ENCODE measurements at regions of chr1 and their contacts with region 1.

Region 1: DNA sequence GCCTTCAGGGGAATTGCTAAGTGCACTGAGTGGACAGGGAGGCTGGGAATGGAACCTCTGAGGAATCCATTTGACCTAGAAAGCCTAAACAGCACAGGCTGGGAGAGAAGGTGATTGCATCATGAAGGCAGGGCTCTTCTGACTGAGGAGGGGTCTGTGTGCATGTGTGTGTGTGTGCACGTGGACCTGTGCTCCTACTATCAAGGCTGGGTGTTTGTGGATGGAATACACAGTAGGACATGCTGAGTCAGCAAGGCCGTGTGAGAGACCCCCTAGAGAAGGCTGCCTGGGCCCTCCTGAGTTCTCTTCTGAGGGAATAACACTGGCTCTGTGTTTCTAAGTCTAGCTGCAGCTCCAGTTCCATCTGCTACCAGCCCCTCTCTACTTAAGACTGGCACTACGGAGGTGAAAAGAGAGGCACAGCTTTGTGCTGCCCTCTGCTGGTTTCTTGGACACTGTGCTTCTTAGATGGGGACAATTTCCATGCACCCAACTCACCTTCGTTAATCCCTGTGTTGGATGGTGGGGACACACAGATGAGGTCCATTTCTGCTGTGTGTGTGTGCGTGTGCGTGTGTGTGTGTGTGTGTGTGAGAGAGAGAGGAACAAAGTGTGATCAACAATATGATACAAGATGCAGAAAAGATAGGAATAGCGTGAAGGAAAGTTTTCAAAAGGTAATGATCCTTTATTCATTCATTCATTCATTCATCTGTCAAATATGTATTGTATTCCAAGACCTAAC is 6.2 kb upstream of the EFCAB14 start:
- DNase-seq: no peak
- H3K4me3 ChIP-seq: no peak overlapping the region
- H3K27ac ChIP-seq: no peak overlapping the region
- H3K4me1 ChIP-seq: no peaks in the 10 kb centered on the region
- H3K27me3 ChIP-seq: no peaks in the 10 kb centered on the region
- CTCF ChIP-seq: peak; percentile 56 to 86 (median 69)
- POLR2A ChIP-seq: no peak

Region 2: DNA sequence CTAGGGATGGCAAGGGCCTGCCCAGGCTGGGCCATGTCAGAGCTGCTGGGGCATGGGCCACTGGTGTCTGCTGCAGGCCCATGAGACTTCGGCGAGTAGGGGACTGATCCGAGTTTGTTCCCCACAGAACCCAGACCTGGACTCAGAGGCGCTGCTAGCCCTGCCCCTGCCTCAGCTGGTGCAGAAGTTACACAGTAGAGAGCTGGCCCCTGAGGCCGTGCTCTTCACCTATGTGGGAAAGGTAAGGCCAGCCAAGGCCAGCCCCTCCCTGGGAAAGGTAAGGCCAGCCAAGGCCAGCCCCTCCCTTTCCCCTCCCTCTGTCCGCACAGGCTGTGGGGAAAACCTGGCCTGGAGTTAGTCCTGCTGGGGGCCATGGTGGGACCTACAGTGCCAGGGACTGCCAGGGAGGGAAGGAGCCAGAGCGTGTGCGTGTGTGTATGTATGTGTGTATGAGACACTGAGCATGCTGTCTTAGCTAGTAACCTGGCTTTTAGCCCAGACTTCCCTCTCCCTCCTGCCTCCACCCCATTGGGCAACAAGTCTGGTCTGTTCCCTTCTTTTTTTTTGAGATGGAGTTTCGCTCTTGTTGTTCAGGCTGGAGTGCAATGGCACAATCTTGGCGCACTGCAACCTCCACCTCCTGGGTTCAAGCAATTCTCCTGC is 323.1 kb before region 1 on chr1:
- intact Hi-C with region 1: loop called (anchors 10 kb)
- DNase-seq: no peak
- H3K4me3 ChIP-seq: no peak overlapping the region
- H3K27ac ChIP-seq: peak overlapping the region; percentile 20
- H3K4me1 ChIP-seq: peaks cover 26% of the 10 kb centered on the region
- H3K27me3 ChIP-seq: no peaks in the 10 kb centered on the region
- CTCF ChIP-seq: no peak
- POLR2A ChIP-seq: no peak

Region 3: DNA sequence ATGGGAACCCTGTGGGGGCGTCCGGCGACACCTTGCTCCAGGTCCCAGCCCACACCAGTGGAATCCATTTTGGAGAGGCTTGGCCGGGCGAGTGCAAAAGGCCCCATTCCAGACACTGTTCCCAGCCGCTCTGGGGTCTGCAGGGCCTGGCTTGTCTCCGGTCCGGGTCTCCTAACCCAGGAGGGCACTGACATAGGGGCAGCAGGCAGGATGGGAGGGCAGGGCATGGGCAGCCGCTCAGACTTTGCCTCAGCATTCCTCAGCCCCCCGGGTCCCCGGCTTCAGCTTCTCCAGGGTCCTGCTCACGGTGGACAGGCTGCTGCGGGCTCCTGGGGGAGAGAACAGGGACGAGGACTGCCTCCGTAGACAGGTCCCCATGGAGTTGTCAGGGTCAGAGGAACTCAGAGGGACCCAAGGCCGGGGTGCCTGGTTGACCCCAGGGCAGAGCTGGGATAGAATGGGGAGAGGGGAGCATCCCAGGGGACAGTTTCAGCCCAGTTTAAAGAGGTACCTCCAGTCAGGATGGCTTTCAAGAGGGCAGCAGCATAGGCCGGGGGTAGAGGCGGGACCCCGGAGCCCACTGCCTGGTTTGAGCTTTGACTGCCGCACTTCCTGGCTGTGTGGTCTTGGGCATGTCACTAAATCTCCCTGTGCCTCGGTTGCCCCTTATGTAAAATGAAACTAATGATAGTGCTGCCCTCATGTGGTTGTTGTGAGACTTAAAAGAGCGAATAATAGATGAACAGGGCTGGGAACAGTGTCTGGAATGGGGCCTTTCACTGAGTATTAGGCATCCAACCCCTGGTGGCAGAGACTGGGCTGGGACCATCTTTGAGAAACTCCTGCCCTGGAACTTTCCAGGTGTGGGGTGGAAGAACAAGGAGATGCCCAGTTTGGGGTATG is 177.4 kb before region 1 on chr1:
- intact Hi-C with region 1: loop called (anchors 10 kb)
- DNase-seq: no peak
- H3K4me3 ChIP-seq: no peak overlapping the region
- H3K27ac ChIP-seq: no peak overlapping the region
- H3K4me1 ChIP-seq: peaks cover 9% of the 10 kb centered on the region
- H3K27me3 ChIP-seq: peaks cover 8% of the 10 kb centered on the region
- CTCF ChIP-seq: peak in 1 of 3 experiments; percentile 38
- POLR2A ChIP-seq: no peak

Region 4: GRCh38 chr1:46616277-46617107 is 108.7 kb before region 1 on chr1 and contains the start of gene MOB3C:
- intact Hi-C with region 1: loop called (anchors 10 kb)
- DNase-seq: peak in 1 of 2 donors; percentile 95
- H3K4me3 ChIP-seq: peak within 1 kb of the TSS; percentile 77 to 79
- H3K27ac ChIP-seq: peak within 1 kb of the TSS; percentile 92
- H3K4me1 ChIP-seq: peaks cover 61% of the 10 kb centered on the region
- H3K27me3 ChIP-seq: no peaks in the 10 kb centered on the region
- CTCF ChIP-seq: no peak
- POLR2A ChIP-seq: peak in 1 of 2 donors; percentile 65
- total RNA-seq, gene MOB3C: 33.9 TPM

Region 5: DNA sequence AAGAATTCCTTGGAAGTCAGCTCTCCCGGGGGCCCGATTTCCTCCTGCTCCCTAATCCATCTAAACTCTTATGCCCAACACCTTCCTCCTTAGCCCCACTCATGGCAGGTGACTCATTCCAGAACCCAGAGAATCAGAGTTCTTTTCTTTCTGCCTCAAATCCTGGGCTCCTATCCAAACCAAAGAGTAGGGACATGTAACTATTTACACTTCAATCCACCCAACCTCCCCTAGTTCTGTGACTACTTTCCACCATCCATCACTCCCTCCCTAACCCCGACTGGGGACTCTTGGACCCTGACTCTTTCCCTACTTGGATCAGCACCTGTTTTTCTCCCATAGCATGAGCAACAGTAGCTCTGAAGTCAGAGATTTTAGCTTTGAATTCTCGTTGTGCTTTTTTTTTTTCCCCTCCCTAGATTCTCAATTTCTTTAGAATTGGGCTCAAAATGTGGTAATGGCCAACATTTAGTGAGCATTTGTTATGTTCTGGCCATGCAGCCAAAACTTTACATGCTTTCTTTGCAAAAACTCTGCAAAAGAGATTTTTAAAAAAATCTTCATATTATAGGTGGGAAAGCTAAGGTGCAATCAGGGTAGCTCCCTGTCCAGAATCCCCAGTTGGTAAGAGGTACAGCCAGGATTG is 223.6 kb after region 1 on chr1:
- intact Hi-C with region 1: no loop called
- DNase-seq: no peak
- H3K4me3 ChIP-seq: no peak overlapping the region
- H3K27ac ChIP-seq: no peak overlapping the region
- H3K4me1 ChIP-seq: no peaks in the 10 kb centered on the region
- H3K27me3 ChIP-seq: no peaks in the 10 kb centered on the region
- CTCF ChIP-seq: no peak
- POLR2A ChIP-seq: no peak

Measured in vagina (tissue), 2 donors.